ENCODE measurements at regions of chr9 and their contacts with region 1.

Region 1: GRCh38 chr9:14018081-14018480 is 295.9 kb downstream of the NFIB start:
- DNase-seq: no peak
- ATAC-seq: no peak
- H3K4me3 ChIP-seq: no peak overlapping the region
- H3K27ac ChIP-seq: no peak overlapping the region
- H3K4me1 ChIP-seq: no peaks in the 10 kb centered on the region
- H3K27me3 ChIP-seq: no peaks in the 10 kb centered on the region
- CTCF ChIP-seq: no peak
- EP300 ChIP-seq: no peak
- POLR2A ChIP-seq: no peak
- RAD21 ChIP-seq: no peak

Region 2: DNA sequence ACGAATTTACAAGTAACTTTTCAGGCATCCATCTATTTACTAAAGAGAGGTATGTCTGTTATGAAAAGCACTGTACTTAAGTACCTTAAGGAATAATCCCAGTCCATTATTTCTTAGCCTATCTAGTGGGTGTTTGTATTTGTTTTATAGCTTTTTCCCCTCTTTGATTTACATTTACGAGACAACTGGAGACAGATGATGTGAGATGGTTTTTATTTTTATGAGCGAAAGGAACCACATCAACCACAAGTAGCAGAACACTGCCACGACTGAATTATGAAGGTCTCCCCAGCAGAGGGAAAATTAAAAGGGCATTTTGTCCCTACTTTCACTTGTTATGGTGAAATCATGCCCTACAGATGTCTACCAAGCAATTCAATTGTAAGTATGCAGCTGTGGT is 62.0 kb before region 1 on chr9:
- CTCF ChIA-PET with region 1: no interaction called
- POLR2A ChIA-PET with region 1: no interaction called
- RAD21 ChIA-PET with region 1: no interaction called
- SMC1A ChIA-PET with region 1: no interaction called
- in situ Hi-C with region 1: loop called (anchors 10 kb)
- intact Hi-C with region 1: no loop called
- DNase-seq: no peak
- ATAC-seq: no peak
- H3K4me3 ChIP-seq: no peak overlapping the region
- H3K27ac ChIP-seq: no peak overlapping the region
- H3K4me1 ChIP-seq: no peaks in the 10 kb centered on the region; the same call in 1 of the 2 replicates
- H3K27me3 ChIP-seq: no peaks in the 10 kb centered on the region
- CTCF ChIP-seq: no peak
- EP300 ChIP-seq: no peak
- POLR2A ChIP-seq: no peak
- RAD21 ChIP-seq: no peak

Region 3: GRCh38 chr9:14103115-14103514 is 85.0 kb after region 1 on chr9:
- CTCF ChIA-PET with region 1: no interaction called
- POLR2A ChIA-PET with region 1: no interaction called
- RAD21 ChIA-PET with region 1: no interaction called
- SMC1A ChIA-PET with region 1: no interaction called
- in situ Hi-C with region 1: no loop called
- intact Hi-C with region 1: no loop called
- DNase-seq: no peak
- ATAC-seq: no peak
- H3K4me3 ChIP-seq: no peak overlapping the region
- H3K27ac ChIP-seq: no peak overlapping the region
- H3K4me1 ChIP-seq: no peaks in the 10 kb centered on the region
- H3K27me3 ChIP-seq: no peaks in the 10 kb centered on the region
- CTCF ChIP-seq: no peak
- EP300 ChIP-seq: no peak
- POLR2A ChIP-seq: no peak
- RAD21 ChIP-seq: no peak

Region 4: DNA sequence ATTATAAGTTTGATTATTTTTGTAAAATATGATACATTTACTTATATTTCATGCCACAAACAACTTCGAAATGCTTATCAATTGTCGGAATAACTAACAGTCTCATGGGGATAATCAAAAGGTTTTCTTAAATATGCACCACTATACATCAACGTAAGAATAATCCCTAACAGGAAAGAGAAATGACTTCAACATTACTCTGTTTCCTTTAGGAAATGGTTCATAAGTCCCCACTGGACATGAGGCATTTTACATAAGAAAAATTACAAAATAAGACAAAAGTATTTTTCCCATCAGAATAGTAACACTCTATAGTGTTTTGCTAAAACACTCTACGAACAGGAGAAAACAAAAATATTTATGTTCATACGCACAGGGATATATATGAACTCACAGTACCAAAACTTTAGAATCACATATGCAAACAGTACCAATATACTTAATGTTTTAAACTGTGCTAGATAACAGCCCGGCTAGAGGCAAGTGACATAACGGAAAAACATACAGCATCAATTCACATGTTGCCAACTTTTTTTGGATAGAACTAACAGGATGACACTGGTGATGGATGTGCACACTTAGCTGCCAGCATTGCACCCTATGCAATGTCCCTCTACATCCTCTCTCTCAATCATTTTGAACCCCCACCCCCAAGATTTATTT is 175.4 kb after region 1 on chr9:
- CTCF ChIA-PET with region 1: no interaction called
- POLR2A ChIA-PET with region 1: no interaction called
- RAD21 ChIA-PET with region 1: no interaction called
- SMC1A ChIA-PET with region 1: no interaction called
- in situ Hi-C with region 1: no loop called
- intact Hi-C with region 1: no loop called
- DNase-seq: no peak
- ATAC-seq: no peak
- H3K4me3 ChIP-seq: no peak overlapping the region
- H3K27ac ChIP-seq: no peak overlapping the region
- H3K4me1 ChIP-seq: no peaks in the 10 kb centered on the region
- H3K27me3 ChIP-seq: no peaks in the 10 kb centered on the region
- CTCF ChIP-seq: no peak
- EP300 ChIP-seq: no peak
- POLR2A ChIP-seq: no peak
- RAD21 ChIP-seq: no peak

Region 5: DNA sequence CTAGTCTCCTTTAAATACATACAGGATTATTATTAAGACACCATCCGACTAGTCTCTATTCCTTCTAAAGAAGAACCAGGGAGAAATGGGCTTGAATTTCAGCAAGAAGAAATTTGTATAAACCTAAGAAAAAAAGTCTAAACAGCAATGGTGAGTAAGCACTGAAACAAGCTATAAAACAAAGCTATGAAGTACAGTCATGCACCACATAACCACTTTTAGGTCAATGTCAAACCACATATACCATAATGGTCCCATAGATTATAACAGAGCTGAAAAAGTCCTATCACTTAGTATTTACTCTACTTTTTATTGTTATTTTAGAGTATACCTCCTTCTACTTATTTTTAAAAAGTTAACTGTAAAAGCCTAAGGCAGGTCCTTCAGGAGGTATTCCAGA is 397.9 kb after region 1 on chr9:
- CTCF ChIA-PET with region 1: no interaction called
- POLR2A ChIA-PET with region 1: interaction called, 10 read pairs
- RAD21 ChIA-PET with region 1: no interaction called
- SMC1A ChIA-PET with region 1: no interaction called
- in situ Hi-C with region 1: no loop called
- intact Hi-C with region 1: no loop called
- DNase-seq: no peak
- ATAC-seq: no peak
- H3K4me3 ChIP-seq: no peak overlapping the region
- H3K27ac ChIP-seq: no peak overlapping the region
- H3K4me1 ChIP-seq: no peaks in the 10 kb centered on the region
- H3K27me3 ChIP-seq: no peaks in the 10 kb centered on the region; a peak in 1 of 4 replicates
- CTCF ChIP-seq: no peak
- EP300 ChIP-seq: no peak
- POLR2A ChIP-seq: no peak
- RAD21 ChIP-seq: no peak